Activated CD8-positive, alpha-beta T cell treated with anti-CD3 and anti-CD28 coated beads, Interleukin-2, amount 10 ng/mL, durations not matched to agents 7 days and 5 days (primary cell): ENCODE measurements at regions of chr7 and their contacts with region 1.

Region 1: GRCh38 chr7:43700059-43700501 is 29.2 kb downstream of the COA1 start:
- DNase-seq: no peak
- ATAC-seq: peak; percentile 63
- H3K4me3 Mint-ChIP-seq: no peak overlapping the region
- H3K27ac Mint-ChIP-seq: no peak overlapping the region
- H3K4me1 Mint-ChIP-seq: peaks cover 71% of the 10 kb centered on the region
- H3K27me3 Mint-ChIP-seq: no peaks in the 10 kb centered on the region

Region 2: DNA sequence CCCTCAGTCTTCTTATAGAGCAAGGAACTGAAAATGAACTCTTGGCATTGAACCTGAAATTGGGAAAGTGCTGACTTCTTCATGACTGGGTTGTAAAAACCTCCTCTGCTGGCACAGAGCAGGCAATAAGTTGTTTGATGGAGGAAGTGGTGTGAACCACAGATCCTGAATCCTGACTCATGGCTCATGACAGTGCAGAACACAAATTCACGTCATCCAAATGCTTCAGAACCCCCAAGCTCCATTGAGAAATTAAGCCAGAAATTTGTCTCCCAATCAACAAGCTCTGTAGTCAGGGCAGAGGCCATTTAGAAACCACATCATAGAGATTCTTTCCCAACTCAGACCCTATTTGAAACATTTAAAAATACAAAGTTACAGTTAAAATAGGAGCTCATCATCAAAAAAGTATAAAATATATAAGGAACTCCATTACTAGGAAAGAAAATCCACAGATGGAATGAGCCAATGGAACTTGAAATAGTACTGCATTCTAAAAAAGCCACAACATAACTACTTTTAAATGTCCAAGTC is 127.5 kb before region 1 on chr7:
- CTCF ChIA-PET with region 1: interaction called, 17 read pairs
- POLR2A ChIA-PET with region 1: no interaction called
- DNase-seq: peak; percentile 63
- ATAC-seq: peak; percentile 88
- H3K4me3 Mint-ChIP-seq: no peak overlapping the region
- H3K27ac Mint-ChIP-seq: no peak overlapping the region
- H3K4me1 Mint-ChIP-seq: peaks cover 30% of the 10 kb centered on the region
- H3K27me3 Mint-ChIP-seq: no peaks in the 10 kb centered on the region

Region 3: DNA sequence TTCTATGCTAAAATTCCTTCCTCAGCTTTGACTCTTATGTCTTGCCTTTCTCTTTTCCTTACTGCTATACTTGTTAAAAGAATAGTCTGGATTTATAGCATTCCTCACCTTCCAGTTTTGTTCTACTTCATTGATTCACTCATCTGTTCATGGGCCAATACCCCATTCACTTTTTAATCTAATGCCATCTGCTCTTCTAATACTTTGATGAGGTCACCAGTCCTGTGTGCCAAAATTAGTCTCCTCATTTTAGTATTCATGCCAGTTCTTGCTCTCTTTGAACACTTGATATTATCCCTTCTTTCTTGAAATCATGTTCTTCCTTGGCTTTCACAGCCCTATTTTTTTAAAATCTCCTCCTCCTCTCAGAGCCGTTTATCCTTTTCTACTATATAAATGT is 97.8 kb before region 1 on chr7:
- CTCF ChIA-PET with region 1: interaction called, 20 read pairs
- POLR2A ChIA-PET with region 1: no interaction called
- DNase-seq: no peak
- ATAC-seq: no peak
- H3K4me3 Mint-ChIP-seq: no peak overlapping the region
- H3K27ac Mint-ChIP-seq: no peak overlapping the region
- H3K4me1 Mint-ChIP-seq: peaks cover 43% of the 10 kb centered on the region
- H3K27me3 Mint-ChIP-seq: no peaks in the 10 kb centered on the region

Region 4: GRCh38 chr7:43639858-43640491 is 60.1 kb before region 1 on chr7:
- CTCF ChIA-PET with region 1: interaction called, 113 read pairs
- POLR2A ChIA-PET with region 1: no interaction called
- DNase-seq: no peak
- ATAC-seq: no peak
- H3K4me3 Mint-ChIP-seq: no peak overlapping the region
- H3K27ac Mint-ChIP-seq: peak overlapping the region; percentile 48
- H3K4me1 Mint-ChIP-seq: peaks cover 79% of the 10 kb centered on the region
- H3K27me3 Mint-ChIP-seq: no peaks in the 10 kb centered on the region

Region 5: DNA sequence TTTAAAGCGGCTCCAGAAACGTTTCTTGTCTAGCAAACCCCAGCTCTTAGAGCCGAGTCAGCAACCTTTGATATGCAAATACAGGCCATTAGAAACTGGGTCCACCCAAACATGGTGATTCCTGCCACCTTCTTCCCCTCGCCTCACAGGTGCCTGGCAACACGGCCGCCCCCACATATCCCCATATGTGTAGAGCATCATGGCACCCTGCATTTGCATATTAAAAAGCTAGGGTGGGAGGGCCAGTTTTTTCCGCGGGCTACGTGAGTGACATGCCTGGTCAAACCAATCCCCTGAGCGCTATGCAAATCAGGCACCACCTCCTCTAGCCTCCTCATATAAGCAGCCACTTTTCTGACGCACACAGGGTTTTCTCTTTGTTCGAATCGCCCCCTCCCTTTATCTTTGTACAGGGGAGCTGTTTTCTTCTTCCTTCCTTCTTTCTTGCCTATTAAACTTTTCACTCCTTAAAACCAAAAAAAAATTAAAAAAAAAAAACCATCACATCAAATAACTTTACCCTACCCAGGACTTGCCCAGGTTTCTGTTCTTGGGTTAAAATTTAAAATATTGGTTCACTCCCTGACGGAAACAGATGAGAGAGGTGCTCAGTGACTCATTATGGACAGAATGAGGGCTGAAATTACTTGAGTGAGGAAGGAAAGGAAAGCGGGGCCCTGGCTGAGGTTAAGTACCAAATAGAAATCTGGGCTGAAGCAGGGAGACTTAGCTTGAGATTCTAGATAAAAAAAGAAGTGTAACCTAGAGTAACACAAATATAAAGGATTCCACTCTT is 30.6 kb before region 1 on chr7:
- CTCF ChIA-PET with region 1: interaction called, 14 read pairs
- POLR2A ChIA-PET with region 1: no interaction called
- DNase-seq: peak; percentile 57
- ATAC-seq: peak; percentile 76
- H3K4me3 Mint-ChIP-seq: peak overlapping the region; percentile 30
- H3K27ac Mint-ChIP-seq: peak overlapping the region; percentile 61
- H3K4me1 Mint-ChIP-seq: peaks cover 49% of the 10 kb centered on the region
- H3K27me3 Mint-ChIP-seq: no peaks in the 10 kb centered on the region

Region 6: GRCh38 chr7:43721193-43721806 is 21.2 kb after region 1 on chr7:
- CTCF ChIA-PET with region 1: interaction called, 24 read pairs
- POLR2A ChIA-PET with region 1: no interaction called
- DNase-seq: no peak
- ATAC-seq: no peak
- H3K4me3 Mint-ChIP-seq: no peak overlapping the region
- H3K27ac Mint-ChIP-seq: no peak overlapping the region
- H3K4me1 Mint-ChIP-seq: peaks cover 39% of the 10 kb centered on the region
- H3K27me3 Mint-ChIP-seq: no peaks in the 10 kb centered on the region

Region 7: DNA sequence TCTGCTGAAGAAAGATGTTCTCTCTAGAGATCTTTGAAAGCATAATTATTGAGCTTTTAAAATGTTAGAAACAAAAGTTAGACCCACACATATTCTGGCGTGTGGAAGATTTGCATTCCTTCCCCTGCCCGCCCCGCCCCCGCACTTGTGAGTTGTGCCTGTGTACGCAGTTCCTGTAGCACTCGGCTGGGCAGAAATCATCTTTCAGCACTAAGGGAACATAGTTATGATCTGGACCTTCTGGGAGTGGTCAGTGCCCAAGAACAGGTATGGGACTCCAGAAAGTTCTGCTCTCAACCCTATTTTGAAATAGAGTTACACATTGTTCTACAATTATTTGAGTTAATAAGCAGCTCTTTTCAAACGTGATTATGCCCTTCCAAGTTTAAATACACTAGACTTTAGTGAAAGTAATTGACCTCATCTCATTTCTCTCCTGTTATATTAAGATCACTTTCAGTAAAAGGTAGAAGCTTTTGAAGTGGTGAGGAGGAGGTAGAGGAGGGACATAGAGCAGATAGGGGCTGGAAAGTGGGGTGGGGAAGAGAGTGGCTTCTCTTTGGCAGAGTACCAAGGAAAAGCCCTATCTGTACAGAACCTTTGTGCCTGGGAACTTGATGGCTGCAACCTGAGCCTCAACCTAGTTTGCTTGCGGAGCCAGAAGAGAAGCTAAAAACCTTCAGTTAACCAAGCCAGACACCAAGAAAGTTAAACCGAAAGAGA is 64.1 kb after region 1 on chr7:
- CTCF ChIA-PET with region 1: no interaction called
- POLR2A ChIA-PET with region 1: no interaction called
- DNase-seq: no peak
- ATAC-seq: peak; percentile 52
- H3K4me3 Mint-ChIP-seq: no peak overlapping the region
- H3K27ac Mint-ChIP-seq: no peak overlapping the region
- H3K4me1 Mint-ChIP-seq: peaks cover 27% of the 10 kb centered on the region
- H3K27me3 Mint-ChIP-seq: no peaks in the 10 kb centered on the region

Region 8: GRCh38 chr7:43879477-43879876 is 179.4 kb after region 1 on chr7:
- CTCF ChIA-PET with region 1: no interaction called
- POLR2A ChIA-PET with region 1: no interaction called
- DNase-seq: no peak
- ATAC-seq: no peak
- H3K4me3 Mint-ChIP-seq: no peak overlapping the region
- H3K27ac Mint-ChIP-seq: no peak overlapping the region
- H3K4me1 Mint-ChIP-seq: peaks cover 3% of the 10 kb centered on the region
- H3K27me3 Mint-ChIP-seq: no peaks in the 10 kb centered on the region